IMR-90 (cell line): ENCODE measurements at regions of chr1 and their contacts with region 1.

Region 1: GRCh38 chr1:84077476-84078107 is 66.5 kb upstream of the PRKACB start:
- DNase-seq: peak; percentile 64
- ATAC-seq: peak; percentile 94
- H3K4me3 ChIP-seq: peak overlapping the region; percentile 93
- H3K27ac ChIP-seq: peak overlapping the region; percentile 98
- H3K4me1 ChIP-seq: no peaks in the 10 kb centered on the region; the same call in 1 of the 2 replicates
- H3K27me3 ChIP-seq: no peaks in the 10 kb centered on the region
- CTCF ChIP-seq: no peak
- POLR2A ChIP-seq: peak; percentile 81
- RAD21 ChIP-seq: no peak

Region 2: GRCh38 chr1:83998498-83999315 is 78.9 kb before region 1 on chr1 and contains the start of gene TTLL7:
- CTCF ChIA-PET with region 1: no interaction called
- POLR2A ChIA-PET with region 1: no interaction called
- dilution Hi-C with region 1: no loop called
- in situ Hi-C with region 1: no loop called
- intact Hi-C with region 1: loop called (anchors 2 kb)
- DNase-seq: peak; percentile 53
- ATAC-seq: peak; percentile 92
- H3K4me3 ChIP-seq: peak within 1 kb of the TSS; percentile 76
- H3K27ac ChIP-seq: peak within 1 kb of the TSS; percentile 89
- H3K4me1 ChIP-seq: no peaks in the 10 kb centered on the region; the same call in 1 of the 2 replicates
- H3K27me3 ChIP-seq: no peaks in the 10 kb centered on the region
- CTCF ChIP-seq: no peak
- POLR2A ChIP-seq: no peak
- RAD21 ChIP-seq: no peak
- total RNA-seq, gene TTLL7: 8.1 and 13.3 TPM in 2 replicates